A549 (cell line): ENCODE measurements at regions of chr7 and their contacts with region 1.

Region 1: DNA sequence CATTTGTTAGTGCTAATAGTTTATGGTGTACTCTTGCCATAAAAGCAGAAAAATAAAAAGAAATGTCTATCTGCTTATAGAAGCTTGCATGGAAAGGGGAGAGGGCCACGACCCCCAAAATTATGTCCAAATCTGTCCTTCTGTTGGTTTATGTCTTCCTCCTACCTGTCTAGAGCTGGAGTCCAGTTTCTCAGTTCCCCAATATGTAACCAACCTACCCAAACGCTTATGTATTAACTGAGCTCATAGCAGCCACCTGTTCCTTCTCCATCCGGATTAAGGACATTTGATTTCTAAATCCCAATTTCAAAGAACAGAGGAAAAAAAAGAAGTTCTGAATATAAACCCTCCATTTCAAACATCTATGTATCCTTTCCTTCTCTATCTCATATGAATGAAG is 30.3 kb upstream of the TPK1 start:
- DNase-seq: no peak
- ATAC-seq: no peak
- H3K4me3 ChIP-seq: no peak overlapping the region
- H3K27ac ChIP-seq: no peak overlapping the region
- H3K4me1 ChIP-seq: no peaks in the 10 kb centered on the region
- CTCF ChIP-seq: no peak
- EP300 ChIP-seq: no peak
- POLR2A ChIP-seq: no peak
- RAD21 ChIP-seq: no peak

Region 2: DNA sequence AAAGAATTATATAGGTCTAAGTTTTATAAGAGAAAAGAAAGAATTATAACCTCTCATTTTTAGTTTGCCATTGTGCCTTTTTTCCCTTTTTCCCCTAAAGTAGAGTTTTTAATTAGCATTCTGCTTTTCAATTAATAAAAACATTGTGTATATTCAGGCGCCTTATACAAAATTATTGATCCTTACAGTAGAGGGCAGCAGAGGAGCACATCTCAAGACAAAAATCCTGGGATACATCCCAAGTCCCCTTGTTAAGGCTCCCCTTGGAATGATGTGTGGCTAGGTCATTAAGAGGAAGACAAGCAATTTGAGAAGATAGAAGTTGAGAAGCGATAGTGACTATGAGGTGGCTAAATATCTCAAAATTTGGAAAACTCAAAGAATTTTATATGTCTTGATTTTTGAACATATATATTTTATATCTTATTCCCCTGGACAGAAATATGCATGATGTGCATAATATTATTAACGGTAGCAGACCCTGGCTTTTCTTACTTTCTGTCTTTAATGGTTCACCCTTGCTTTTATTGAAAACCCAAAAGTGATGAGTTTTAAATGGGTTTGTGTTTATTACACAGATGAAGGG is 11.3 kb before region 1 on chr7:
- CTCF ChIA-PET with region 1: interaction called, 11 read pairs
- POLR2A ChIA-PET with region 1: no interaction called
- DNase-seq: peak; percentile 35 to 52
- ATAC-seq: peak; percentile 43 to 77; a peak in 4 of 6 replicates
- H3K4me3 ChIP-seq: no peak overlapping the region
- H3K27ac ChIP-seq: no peak overlapping the region
- H3K4me1 ChIP-seq: no peaks in the 10 kb centered on the region
- CTCF ChIP-seq: peak; percentile 62
- EP300 ChIP-seq: no peak
- POLR2A ChIP-seq: no peak
- RAD21 ChIP-seq: peak; percentile 68